HEK293 (cell line): ENCODE measurements at regions of chr19 and their contacts with region 1.

Region 1: DNA sequence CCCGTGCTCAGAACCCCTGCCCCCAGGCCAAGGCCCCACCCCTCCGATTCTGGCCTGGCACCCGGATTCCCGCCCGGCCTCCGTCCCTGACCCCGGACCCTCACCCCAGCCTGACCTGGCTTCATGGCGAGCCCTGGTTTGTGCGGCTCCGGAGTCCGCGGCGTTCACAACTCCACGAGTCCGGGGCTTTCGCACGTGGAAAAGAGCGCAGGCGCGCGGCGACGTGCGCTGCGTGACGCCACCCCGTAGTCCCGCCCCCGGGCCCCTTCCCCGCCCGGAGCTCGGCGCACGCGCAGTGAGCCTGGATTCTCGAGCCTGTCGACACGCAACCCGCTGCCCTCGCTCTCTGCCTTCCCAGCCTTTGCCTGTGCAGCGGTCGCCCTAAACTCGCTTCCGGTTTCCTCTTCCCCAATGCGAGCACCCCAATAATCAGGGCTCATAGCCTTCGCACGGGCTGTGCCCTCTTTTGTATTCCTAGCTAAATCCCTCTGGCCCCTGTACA is at the start of gene FBL:
- H3K4me3 ChIP-seq: peak within 1 kb of the TSS; percentile 62
- H3K27ac ChIP-seq: peak within 1 kb of the TSS; percentile 79
- H3K4me1 ChIP-seq: peaks cover 49% of the 10 kb centered on the region
- CTCF ChIP-seq: no peak

Region 2: GRCh38 chr19:39765091-39766076 is 80.8 kb before region 1 on chr19:
- CTCF ChIA-PET with region 1: interaction called, 72 read pairs
- POLR2A ChIA-PET with region 1: no interaction called
- H3K4me3 ChIP-seq: no peak overlapping the region
- H3K27ac ChIP-seq: no peak overlapping the region
- H3K4me1 ChIP-seq: peaks cover 6% of the 10 kb centered on the region
- CTCF ChIP-seq: peak; percentile 31; the same call in 1 of the 2 replicates

Region 3: DNA sequence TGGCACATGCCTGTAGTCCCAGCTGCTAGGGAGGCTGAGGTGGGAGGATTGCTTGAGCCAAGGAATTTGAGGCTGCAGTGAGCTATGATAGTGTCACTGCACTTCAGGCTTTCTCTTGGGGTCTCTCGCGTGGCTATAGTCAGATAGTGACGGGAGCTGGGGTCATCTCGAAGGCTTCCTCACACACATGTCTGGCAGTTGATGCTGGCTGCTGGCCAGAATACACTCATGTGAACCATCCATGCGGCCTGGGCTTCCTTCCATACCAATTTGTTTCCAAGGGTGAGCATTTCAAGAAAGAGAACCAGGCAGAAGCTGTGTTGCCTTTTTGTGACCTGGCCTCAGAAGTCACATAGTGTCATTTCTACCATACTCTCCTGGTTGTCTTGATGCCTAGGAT is 41.1 kb before region 1 on chr19:
- CTCF ChIA-PET with region 1: interaction called, 61 read pairs
- POLR2A ChIA-PET with region 1: interaction called, 6 read pairs
- H3K4me3 ChIP-seq: no peak overlapping the region
- H3K27ac ChIP-seq: no peak overlapping the region
- H3K4me1 ChIP-seq: 0 out of 2 replicates have a peak, but pooled peaks cover 3% of the 10 kb centered on the region
- CTCF ChIP-seq: no peak

Region 4: GRCh38 chr19:39833464-39834286 is 12.6 kb before region 1 on chr19 and contains the start of gene DYRK1B:
- CTCF ChIA-PET with region 1: interaction called, 63 read pairs
- POLR2A ChIA-PET with region 1: interaction called, 124 read pairs
- H3K4me3 ChIP-seq: peak within 1 kb of the TSS; percentile 64
- H3K27ac ChIP-seq: peak within 1 kb of the TSS; percentile 95
- H3K4me1 ChIP-seq: peaks cover 18% of the 10 kb centered on the region
- CTCF ChIP-seq: peak; percentile 5; the same call in 1 of the 2 replicates

Region 5: GRCh38 chr19:39970675-39971379 is 124.6 kb after region 1 on chr19 and contains the start of gene PSMC4:
- CTCF ChIA-PET with region 1: interaction called, 49 read pairs
- POLR2A ChIA-PET with region 1: interaction called, 20 read pairs
- H3K4me3 ChIP-seq: peak within 1 kb of the TSS; percentile 66
- H3K27ac ChIP-seq: peak within 1 kb of the TSS; percentile 80
- H3K4me1 ChIP-seq: peaks cover 14% of the 10 kb centered on the region
- CTCF ChIP-seq: peak; percentile 100